ENCODE measurements at regions of chr11 and their contacts with region 1.

Region 1: DNA sequence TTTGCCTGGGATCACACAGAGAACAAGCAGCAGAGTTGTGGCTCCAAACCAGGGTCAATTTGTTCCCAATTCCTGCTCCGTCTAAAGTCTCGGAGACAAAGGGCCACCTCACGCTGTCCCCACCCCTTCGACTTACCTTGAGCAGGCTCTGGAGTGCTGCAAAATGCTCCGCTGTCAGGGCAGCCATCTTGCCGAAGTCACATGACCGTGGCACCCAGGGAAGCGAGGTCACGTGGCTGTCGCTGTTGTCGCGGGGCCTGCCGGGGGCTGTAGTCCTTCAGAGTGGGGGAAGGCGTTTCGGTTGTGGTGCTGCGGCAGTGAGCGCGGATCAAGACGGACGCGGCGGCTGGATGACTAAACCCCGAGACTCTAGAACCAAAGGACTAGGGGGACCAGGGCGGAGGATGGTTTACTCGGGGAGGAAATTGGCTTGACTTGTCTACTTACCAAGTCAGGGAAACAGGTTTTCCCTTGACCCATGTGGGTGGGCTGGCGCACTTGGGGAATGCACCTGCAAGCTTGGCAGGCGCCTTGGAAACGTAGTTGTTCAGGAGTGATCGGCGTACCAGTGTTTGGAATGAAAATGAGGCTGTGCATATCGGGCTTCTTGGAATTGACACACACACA is at the start of gene COMMD9:
- DNase-seq: peak; percentile 89 to 96 (median 91)
- H3K4me3 ChIP-seq: peak within 1 kb of the TSS; percentile 73 to 95
- H3K4me3 Mint-ChIP-seq: peak within 1 kb of the TSS; percentile 88 to 97 (median 95)
- H3K27ac ChIP-seq: peak within 1 kb of the TSS; percentile 31
- H3K27ac Mint-ChIP-seq: peak within 1 kb of the TSS; percentile 65 to 96 (median 93)
- H3K4me1 ChIP-seq: peaks cover 19% of the 10 kb centered on the region
- H3K4me1 Mint-ChIP-seq: peaks cover 25 to 46% (median 37%) of the 10 kb centered on the region in 4 donors
- H3K27me3 ChIP-seq: no peaks in the 10 kb centered on the region
- H3K27me3 Mint-ChIP-seq: no peaks in the 10 kb centered on the region
- total RNA-seq, gene COMMD9: 33.9 to 41.4 TPM

Region 2: DNA sequence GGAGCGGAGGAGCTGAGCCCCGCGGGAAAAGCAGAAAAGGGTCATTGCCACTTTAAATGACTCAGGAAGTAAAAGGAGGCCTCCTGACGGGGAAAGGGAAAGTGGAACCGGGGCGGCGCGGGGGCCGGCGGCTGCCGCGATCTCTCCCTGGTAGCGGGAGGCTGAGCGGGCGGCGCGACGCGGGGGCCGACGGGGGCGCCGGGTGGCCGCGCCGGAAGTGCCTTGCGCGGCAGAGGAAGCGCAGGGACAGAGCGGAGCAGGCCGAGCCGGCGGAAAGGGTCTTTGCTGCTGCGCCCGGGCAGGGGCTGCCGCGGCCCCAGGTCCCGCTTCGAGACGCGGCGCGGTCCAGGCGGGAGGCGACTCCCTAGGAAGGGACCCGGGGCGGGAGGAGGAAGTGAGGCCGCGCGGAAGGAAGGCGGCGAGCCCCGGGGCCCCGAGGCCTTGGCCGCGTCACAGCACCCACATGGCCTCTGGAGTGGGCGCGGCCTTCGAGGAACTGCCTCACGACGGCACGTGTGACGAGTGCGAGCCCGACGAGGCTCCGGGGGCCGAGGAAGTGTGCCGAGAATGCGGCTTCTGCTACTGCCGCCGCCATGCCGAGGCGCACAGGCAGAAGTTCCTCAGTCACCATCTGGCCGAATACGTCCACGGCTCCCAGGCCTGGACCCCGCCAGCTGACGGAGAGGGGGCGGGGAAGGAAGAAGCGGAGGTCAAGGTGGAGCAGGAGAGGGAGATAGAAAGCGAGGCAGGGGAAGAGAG is 626.5 kb before region 1 on chr11 and contains the start of gene TRIM44:
- CTCF ChIA-PET with region 1: no interaction called
- POLR2A ChIA-PET with region 1: interaction called, 4 read pairs
- intact Hi-C with region 1: loop called (anchors 1 kb)
- DNase-seq: peak; percentile 81 to 86 (median 84)
- H3K4me3 ChIP-seq: peak within 1 kb of the TSS; percentile 55 to 81
- H3K4me3 Mint-ChIP-seq: peak within 1 kb of the TSS; percentile 93 to 99 (median 96)
- H3K27ac ChIP-seq: peak within 1 kb of the TSS; percentile 74
- H3K27ac Mint-ChIP-seq: peak within 1 kb of the TSS; percentile 95 to 99 (median 96)
- H3K4me1 ChIP-seq: peaks cover 34% of the 10 kb centered on the region
- H3K4me1 Mint-ChIP-seq: peaks cover 34 to 50% (median 43%) of the 10 kb centered on the region in 4 donors
- H3K27me3 ChIP-seq: no peaks in the 10 kb centered on the region
- H3K27me3 Mint-ChIP-seq: peaks cover 3 to 5% of the 10 kb centered on the region in 2 donors
- total RNA-seq, gene TRIM44: 49.8 to 53.1 TPM

Region 3: DNA sequence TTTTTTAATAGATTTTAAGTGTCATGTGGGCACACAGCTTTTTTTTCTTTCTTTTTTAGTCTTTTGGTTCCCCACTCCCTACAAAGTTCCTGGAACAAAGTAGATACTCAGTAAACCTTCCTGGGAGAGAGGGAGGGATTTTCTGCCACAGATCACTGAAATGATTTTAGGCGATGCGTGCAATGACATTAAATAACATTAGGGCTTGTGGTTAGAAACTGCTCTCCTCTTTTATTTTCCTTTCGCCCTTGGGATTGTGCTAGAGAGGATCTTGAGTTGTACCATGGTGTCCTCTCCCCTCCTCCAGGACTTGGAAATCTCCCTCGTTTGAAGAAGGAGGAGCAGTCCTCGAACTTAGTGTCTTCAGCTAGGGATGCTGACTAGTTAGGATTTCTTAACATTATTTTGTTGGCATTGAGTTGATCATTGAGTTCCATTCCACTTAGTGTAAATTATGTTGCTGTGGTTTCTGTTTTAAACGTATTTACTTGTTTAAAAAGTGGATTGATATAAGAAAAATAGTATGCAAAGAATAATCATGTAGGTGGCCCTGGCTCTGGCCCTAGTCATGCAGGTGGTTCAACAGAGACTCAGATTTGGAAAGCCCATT is 132.3 kb after region 1 on chr11:
- CTCF ChIA-PET with region 1: no interaction called
- POLR2A ChIA-PET with region 1: no interaction called
- intact Hi-C with region 1: loop called (anchors 5 kb)
- DNase-seq: no peak
- H3K4me3 ChIP-seq: no peak overlapping the region
- H3K4me3 Mint-ChIP-seq: peak overlapping the region in 7 of 8 donors; percentile 60 to 86 (median 68)
- H3K27ac ChIP-seq: no peak overlapping the region
- H3K27ac Mint-ChIP-seq: peak overlapping the region; percentile 77 to 93 (median 85)
- H3K4me1 ChIP-seq: peaks cover 69% of the 10 kb centered on the region
- H3K4me1 Mint-ChIP-seq: peaks cover 34 to 81% (median 62%) of the 10 kb centered on the region in 4 donors
- H3K27me3 ChIP-seq: no peaks in the 10 kb centered on the region
- H3K27me3 Mint-ChIP-seq: no peaks in the 10 kb centered on the region

Region 4: GRCh38 chr11:36492724-36493304 is 203.5 kb after region 1 on chr11:
- CTCF ChIA-PET with region 1: interaction called, 131 read pairs
- POLR2A ChIA-PET with region 1: interaction called, 8 read pairs
- intact Hi-C with region 1: loop called (anchors 1 kb)
- DNase-seq: peak in 4 of 5 donors; percentile 42 to 54 (median 46)
- H3K4me3 ChIP-seq: no peak overlapping the region
- H3K4me3 Mint-ChIP-seq: no peak overlapping the region
- H3K27ac ChIP-seq: no peak overlapping the region
- H3K27ac Mint-ChIP-seq: peak overlapping the region in 5 of 7 donors; percentile 18 to 76 (median 26)
- H3K4me1 ChIP-seq: peaks cover 13% of the 10 kb centered on the region
- H3K4me1 Mint-ChIP-seq: peaks cover 13 to 31% (median 17%) of the 10 kb centered on the region in 4 donors
- H3K27me3 ChIP-seq: no peaks in the 10 kb centered on the region
- H3K27me3 Mint-ChIP-seq: no peaks in the 10 kb centered on the region

Region 5: GRCh38 chr11:36746886-36747710 is 457.8 kb after region 1 on chr11:
- CTCF ChIA-PET with region 1: interaction called, 12 read pairs
- POLR2A ChIA-PET with region 1: interaction called, 3 read pairs
- intact Hi-C with region 1: no loop called
- DNase-seq: peak; percentile 73 to 82 (median 80)
- H3K4me3 ChIP-seq: no peak overlapping the region
- H3K4me3 Mint-ChIP-seq: no peak overlapping the region
- H3K27ac ChIP-seq: no peak overlapping the region
- H3K27ac Mint-ChIP-seq: no peak overlapping the region
- H3K4me1 ChIP-seq: no peaks in the 10 kb centered on the region
- H3K4me1 Mint-ChIP-seq: peaks cover 6 to 11% (median 8%) of the 10 kb centered on the region in 4 donors
- H3K27me3 ChIP-seq: no peaks in the 10 kb centered on the region
- H3K27me3 Mint-ChIP-seq: peaks cover 15 to 31% of the 10 kb centered on the region in 2 donors